ENCODE measurements at regions of chr9 and their contacts with region 1.

Region 1: GRCh38 chr9:71079451-71079850 is 42.0 kb downstream of the TRPM3 start:
- DNase-seq: no peak
- ATAC-seq: no peak
- H3K4me3 ChIP-seq: no peak overlapping the region
- H3K27ac ChIP-seq: no peak overlapping the region
- H3K4me1 ChIP-seq: no peaks in the 10 kb centered on the region
- H3K27me3 ChIP-seq: no peaks in the 10 kb centered on the region
- CTCF ChIP-seq: no peak
- POLR2A ChIP-seq: no peak

Region 2: DNA sequence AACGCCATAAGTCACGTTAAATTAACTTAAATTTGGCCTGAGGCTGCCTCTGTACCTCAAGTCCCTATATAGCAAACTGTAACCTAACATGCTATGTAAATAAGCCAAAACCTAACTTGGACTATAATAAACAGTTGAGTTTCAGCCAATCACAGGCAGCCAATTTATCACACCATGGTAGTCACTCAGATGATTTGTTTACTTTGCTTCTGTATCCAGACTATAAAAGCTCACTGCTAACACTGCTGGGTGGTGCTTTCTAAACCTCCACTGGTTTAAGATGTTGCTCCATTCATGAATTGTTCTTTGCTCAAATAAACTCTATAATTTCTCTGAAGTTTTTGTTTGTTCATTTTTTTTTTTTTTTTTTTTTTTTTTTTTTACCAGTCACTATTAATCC is 20.8 kb before region 1 on chr9:
- intact Hi-C with region 1: loop called in 1 of 10 experiments (anchors 2 kb)
- DNase-seq: no peak
- ATAC-seq: no peak
- H3K4me3 ChIP-seq: no peak overlapping the region
- H3K27ac ChIP-seq: no peak overlapping the region
- H3K4me1 ChIP-seq: no peaks in the 10 kb centered on the region
- H3K27me3 ChIP-seq: peaks cover 0 to 3% (median 0%) of the 10 kb centered on the region in 9 donors
- CTCF ChIP-seq: no peak
- POLR2A ChIP-seq: no peak

Region 3: DNA sequence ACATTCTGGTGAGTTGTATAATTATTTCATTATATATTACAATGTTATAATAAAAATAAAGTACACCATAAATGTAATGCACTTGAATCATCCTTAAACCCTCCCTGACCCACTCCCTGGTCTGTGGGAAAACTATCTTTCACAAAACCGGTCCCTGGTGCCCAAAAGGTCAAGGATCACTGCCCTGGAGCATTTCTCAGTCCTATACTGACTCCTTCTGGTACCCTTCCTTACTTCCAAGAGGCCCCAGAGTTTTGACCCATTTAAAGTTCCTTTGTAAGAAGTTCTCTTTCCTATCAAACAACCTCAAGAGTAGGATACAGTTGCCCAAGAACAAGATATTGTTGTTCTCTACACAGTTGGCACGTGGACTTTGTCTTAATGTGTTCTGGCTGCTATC is 130.9 kb after region 1 on chr9:
- intact Hi-C with region 1: no loop called
- DNase-seq: no peak
- ATAC-seq: no peak
- H3K4me3 ChIP-seq: no peak overlapping the region
- H3K27ac ChIP-seq: no peak overlapping the region
- H3K4me1 ChIP-seq: no peaks in the 10 kb centered on the region
- H3K27me3 ChIP-seq: no peaks in the 10 kb centered on the region
- CTCF ChIP-seq: no peak
- POLR2A ChIP-seq: no peak

Measured in heart left ventricle (tissue), 16 donors.